RWPE1 (cell line): ENCODE measurements at regions of chr5 and their contacts with region 1.

Region 1: GRCh38 chr5:62143268-62144229 is 162.5 kb upstream of the KIF2A start:
- DNase-seq: peak; percentile 31
- H3K27ac ChIP-seq: no peak overlapping the region
- CTCF ChIP-seq: peak; percentile 74

Region 2: GRCh38 chr5:61933787-61934626 is 209.5 kb before region 1 on chr5:
- CTCF ChIA-PET with region 1: interaction called, 17 read pairs
- POLR2A ChIA-PET with region 1: no interaction called
- DNase-seq: peak; percentile 78
- H3K27ac ChIP-seq: no peak overlapping the region
- CTCF ChIP-seq: peak; percentile 89

Region 3: GRCh38 chr5:62371409-62371808 is 227.9 kb after region 1 on chr5:
- CTCF ChIA-PET with region 1: no interaction called
- POLR2A ChIA-PET with region 1: no interaction called
- DNase-seq: no peak
- H3K27ac ChIP-seq: no peak overlapping the region
- CTCF ChIP-seq: no peak

Region 4: DNA sequence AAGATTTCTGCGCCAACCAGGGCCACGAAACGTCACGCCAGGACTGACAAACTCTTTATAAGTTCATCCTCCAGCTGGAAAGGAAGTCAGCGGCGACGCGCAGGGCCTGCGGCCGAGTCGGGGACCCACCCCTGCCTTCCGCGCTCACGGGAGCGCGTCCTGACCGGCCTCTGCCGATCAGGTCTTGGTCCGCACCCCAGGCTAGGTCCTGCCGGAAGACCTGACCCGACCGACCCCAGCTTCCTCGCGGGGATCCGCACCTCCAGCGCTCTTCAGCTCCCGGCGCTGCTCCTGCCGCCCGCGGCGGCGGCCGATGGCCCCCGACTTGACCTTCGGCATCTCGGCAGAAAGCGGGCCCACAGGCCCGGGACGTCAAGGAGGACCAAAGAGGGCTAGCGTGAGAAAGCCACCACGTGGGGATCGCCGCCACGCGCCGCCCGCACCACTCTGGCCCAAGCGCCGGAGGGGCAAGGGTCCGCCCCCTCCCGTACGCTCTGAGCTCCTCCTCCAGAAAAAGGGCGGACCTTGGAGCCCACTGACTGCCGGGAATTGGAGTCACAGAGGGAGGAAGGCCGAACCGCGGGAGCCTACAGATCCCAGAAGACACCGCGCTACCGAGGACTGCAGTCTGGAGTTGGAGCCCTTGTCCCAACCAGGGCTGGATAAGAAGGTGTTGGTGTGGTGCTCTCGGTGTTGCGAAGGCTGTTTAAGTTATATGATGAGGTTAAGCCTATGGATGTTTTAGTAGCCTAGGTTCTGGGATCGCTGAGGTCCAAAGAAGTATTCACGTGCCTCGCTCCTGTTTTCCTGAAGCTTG is 260.1 kb after region 1 on chr5 and contains the start of gene DIMT1:
- CTCF ChIA-PET with region 1: no interaction called
- POLR2A ChIA-PET with region 1: no interaction called
- DNase-seq: peak; percentile 98
- H3K27ac ChIP-seq: peak within 1 kb of the TSS; percentile 94
- CTCF ChIP-seq: no peak